Colonic mucosa (tissue), 4 donors: ENCODE measurements at regions of chr5 and their contacts with region 1.

Region 1: DNA sequence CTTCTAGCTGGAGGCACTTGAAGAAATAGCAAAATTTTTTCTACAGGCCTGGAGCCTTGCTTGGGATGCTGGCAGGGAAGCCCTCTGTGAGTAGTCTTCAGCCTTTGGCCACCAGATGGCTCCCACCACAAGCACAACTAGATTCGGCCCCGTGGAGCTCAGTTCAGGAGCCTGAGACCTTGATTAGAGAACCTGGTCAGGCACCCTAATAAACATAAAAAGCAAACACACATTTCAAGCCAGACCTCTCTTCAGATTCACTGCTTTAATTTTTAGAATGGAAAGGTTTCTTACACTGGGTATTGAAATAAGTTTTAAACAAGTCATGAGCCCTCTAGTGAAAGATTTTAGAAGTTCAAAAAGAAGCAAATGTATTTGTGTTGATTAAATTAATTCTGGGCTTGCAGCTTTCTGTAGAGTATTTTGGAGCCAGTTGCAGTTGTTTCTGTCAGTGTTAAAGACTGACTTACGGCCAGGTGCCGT is 41.4 kb downstream of the GLRX start:
- DNase-seq: peak; percentile 81
- H3K4me3 ChIP-seq: no peak overlapping the region
- H3K27ac ChIP-seq: no peak overlapping the region
- H3K4me1 ChIP-seq: no peaks in the 10 kb centered on the region
- H3K27me3 ChIP-seq: no peaks in the 10 kb centered on the region
- CTCF ChIP-seq: peak; percentile 86

Region 2: DNA sequence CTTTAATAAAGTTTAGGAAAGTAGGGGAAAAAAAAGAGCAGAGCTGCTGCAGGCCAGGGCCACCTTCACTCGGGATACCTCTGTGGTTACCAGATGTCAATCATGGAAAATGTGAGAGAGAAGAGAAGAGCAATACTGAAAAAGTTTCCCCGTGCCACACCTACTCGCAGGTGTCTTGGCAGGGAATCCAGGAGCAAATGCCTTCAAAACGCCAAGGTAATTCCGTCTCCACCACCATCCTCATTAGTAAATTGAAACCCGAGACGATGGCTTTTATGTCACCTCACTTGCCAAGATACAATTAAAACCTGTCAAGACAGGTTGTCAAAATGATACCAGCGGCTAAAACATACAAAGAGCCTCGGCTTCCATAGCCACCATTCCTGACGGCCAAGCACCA is 340.3 kb before region 1 on chr5:
- intact Hi-C with region 1: no loop called
- DNase-seq: no peak
- H3K4me3 ChIP-seq: no peak overlapping the region
- H3K27ac ChIP-seq: no peak overlapping the region
- H3K4me1 ChIP-seq: no peaks in the 10 kb centered on the region
- H3K27me3 ChIP-seq: no peaks in the 10 kb centered on the region
- CTCF ChIP-seq: no peak

Region 3: DNA sequence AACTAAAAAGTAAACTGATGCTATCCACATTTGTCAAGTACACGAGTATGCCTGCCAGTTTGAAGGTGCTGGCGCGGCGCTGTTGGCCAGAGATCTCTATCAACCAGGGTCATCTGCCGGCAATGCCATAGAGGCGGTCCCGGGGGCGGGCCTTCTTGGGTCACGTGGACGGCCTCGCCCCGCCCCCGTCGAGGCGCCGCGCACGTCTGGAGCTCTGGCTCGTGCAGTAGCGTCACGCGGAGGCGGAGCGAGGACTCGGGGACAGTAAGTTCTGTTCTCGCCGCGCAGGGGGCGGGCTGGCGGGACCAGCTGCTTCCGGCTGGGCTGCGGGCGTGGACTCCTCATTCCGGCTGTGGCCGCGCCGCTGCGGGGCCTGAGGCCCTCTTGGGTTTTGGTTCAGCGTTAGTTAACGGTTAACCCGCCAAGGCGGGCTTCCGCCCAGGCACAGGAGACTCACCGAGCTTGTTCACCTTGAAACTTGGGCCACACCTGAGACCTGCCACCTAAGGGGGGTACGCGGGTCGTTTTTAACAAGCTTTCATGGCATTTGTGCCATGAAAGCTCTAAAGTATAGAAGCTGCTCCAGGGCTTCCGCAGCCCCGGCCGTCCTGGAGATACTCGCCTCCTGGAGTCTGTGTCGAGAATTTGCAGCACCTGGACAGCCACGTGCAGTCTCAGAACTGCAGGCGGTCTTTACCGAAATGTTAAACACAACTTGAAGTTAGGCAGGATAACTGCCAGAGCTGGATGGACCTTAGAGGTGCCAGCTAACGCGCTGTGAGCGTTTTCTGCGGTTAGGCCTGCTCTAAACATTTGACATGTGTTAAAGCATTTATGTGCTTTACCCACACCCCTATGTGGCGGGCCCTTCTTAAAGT is 134.3 kb before region 1 on chr5 and contains the start of gene RFESD:
- intact Hi-C with region 1: loop called (anchors 5 kb)
- DNase-seq: peak; percentile 99
- H3K4me3 ChIP-seq: peak within 1 kb of the TSS; percentile 51
- H3K27ac ChIP-seq: peak within 1 kb of the TSS; percentile 91
- H3K4me1 ChIP-seq: no peaks in the 10 kb centered on the region
- H3K27me3 ChIP-seq: no peaks in the 10 kb centered on the region
- CTCF ChIP-seq: peak; percentile 19
- total RNA-seq, gene RFESD: 0.89 to 2.0 TPM

Region 4: DNA sequence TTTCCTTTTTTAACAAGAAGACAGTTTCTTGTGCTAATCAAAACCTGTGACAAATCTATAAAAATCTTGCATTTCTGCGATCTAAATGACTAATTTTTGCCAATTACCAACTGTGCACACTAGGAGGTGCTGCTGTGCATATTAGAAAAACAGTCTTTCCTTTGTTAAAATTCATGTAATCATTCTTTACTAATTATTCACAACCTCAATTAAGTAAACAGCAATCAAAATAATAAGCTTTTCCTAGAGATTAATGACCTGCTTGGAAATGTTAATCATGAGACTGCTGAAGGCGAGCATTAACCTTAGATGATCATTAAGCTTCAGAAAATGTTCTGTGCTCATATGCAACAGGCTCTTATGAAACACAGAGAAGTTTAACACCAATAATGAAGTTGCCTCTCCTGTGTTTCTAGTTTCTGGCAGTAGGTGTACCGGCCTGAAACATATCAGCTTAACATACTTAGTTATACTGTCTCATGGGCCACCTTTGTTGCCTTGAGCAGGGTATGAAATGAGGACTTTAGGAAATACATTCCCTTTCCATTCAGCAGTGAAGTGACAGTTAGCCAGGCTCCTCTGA is 116.8 kb before region 1 on chr5:
- intact Hi-C with region 1: loop called (anchors 5 kb)
- DNase-seq: peak; percentile 38
- H3K4me3 ChIP-seq: no peak overlapping the region
- H3K27ac ChIP-seq: no peak overlapping the region
- H3K4me1 ChIP-seq: no peaks in the 10 kb centered on the region
- H3K27me3 ChIP-seq: no peaks in the 10 kb centered on the region
- CTCF ChIP-seq: peak; percentile 81

Region 5: GRCh38 chr5:95718203-95718602 is 62.9 kb before region 1 on chr5:
- intact Hi-C with region 1: no loop called
- DNase-seq: no peak
- H3K4me3 ChIP-seq: no peak overlapping the region
- H3K27ac ChIP-seq: peak overlapping the region; percentile 5
- H3K4me1 ChIP-seq: peaks cover 8% of the 10 kb centered on the region
- H3K27me3 ChIP-seq: no peaks in the 10 kb centered on the region
- CTCF ChIP-seq: no peak

Region 6: DNA sequence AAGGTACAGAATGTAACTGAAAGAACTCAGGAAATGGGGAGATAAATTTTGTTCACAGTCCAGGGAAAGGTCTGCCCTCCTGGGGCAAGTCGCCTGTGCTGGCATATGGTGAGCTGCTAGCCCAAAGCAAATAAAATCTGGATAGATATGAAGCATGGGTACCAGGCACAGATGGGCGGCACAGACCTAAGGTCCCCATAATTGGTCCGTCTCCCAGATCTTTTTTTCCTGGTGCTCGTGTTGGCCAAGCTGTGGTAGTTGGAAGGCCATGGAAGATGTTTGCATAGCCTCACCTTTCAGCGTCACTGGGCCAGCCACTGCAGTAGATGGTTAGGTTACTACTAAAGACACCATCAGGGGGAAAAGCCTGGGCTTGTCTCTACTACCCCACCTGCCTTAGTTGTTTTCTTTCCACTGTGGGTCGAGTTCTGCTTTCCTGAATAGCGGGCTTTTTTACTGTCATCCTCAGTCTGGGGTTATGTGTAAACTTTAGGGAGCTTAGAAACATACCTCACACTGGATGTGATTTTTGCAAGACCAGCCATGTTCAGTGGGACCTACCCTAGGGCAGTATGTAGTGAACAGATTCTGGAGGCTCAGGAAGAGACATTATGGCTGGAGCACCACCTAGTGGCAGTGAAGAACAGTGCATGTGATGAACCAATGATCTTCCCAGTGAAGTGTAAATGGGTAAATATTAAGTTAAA is 65.6 kb after region 1 on chr5:
- intact Hi-C with region 1: loop called (anchors 2 kb)
- DNase-seq: peak; percentile 80
- H3K4me3 ChIP-seq: no peak overlapping the region
- H3K27ac ChIP-seq: no peak overlapping the region
- H3K4me1 ChIP-seq: peaks cover 7% of the 10 kb centered on the region
- H3K27me3 ChIP-seq: no peaks in the 10 kb centered on the region
- CTCF ChIP-seq: peak; percentile 92